GM18951 (cell line): ENCODE measurements at regions of chr13 and their contacts with region 1.

Region 1: GRCh38 chr13:67224148-67224846 is 5.8 kb downstream of the PCDH9 start:
- POLR2A ChIP-seq: no peak

Region 2: GRCh38 chr13:66689628-66690027 is 534.7 kb before region 1 on chr13:
- in situ Hi-C with region 1: loop called (anchors 25 kb)
- POLR2A ChIP-seq: no peak

Region 3: DNA sequence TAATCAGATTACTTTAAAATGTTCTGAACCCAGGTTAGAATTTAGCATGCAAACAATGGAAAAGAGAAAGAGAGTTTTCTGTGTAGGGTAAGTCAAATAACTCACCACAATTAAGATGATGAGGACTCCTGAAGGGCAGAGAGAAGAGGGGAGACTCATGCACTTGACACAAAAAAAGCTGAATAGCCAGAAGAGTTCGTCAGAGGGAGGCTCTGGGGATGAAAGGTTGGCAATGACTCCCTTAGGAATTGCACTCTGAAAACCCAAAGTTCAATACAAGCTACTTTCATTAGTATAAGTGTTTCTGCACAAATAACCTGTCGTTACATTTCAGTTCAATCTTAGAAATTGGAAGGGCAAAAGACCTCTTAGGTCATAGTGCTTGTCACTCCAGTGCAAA is 440.2 kb after region 1 on chr13:
- in situ Hi-C with region 1: no loop called
- POLR2A ChIP-seq: no peak